ENCODE measurements at regions of chr9 and their contacts with region 1.

Region 1: DNA sequence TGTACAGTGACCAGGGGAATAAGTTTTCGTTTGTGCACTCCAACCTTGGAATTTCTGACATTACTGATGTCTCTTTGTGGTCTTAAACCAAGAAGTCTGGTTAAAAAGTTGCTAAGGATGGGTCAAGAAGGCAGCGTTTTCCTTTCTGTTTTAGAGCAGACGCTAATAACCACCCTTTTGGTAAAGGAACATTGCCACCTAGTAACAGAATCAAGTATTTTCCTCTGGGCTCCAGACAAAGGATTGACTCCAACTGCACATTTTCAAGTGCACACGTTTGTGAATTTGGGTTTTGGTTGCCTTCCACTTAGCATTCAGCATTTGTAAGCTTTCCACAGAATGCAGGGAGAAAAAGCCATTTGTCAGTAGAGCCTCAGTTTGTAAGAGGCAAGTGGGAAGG is 22.2 kb upstream of the CEP78 start:
- DNase-seq: no peak
- ATAC-seq: peak; percentile 49
- H3K4me3 Mint-ChIP-seq: no peak overlapping the region
- H3K27ac Mint-ChIP-seq: no peak overlapping the region
- H3K4me1 Mint-ChIP-seq: peaks cover 35% of the 10 kb centered on the region
- H3K27me3 Mint-ChIP-seq: no peaks in the 10 kb centered on the region
- CTCF ChIP-seq: peak; percentile 55

Region 2: GRCh38 chr9:77714077-77714549 is 499.6 kb before region 1 on chr9:
- CTCF ChIA-PET with region 1: no interaction called
- POLR2A ChIA-PET with region 1: no interaction called
- intact Hi-C with region 1: no loop called
- DNase-seq: no peak
- ATAC-seq: no peak
- H3K4me3 Mint-ChIP-seq: no peak overlapping the region
- H3K27ac Mint-ChIP-seq: no peak overlapping the region
- H3K4me1 Mint-ChIP-seq: peaks cover 17% of the 10 kb centered on the region
- H3K27me3 Mint-ChIP-seq: no peaks in the 10 kb centered on the region
- CTCF ChIP-seq: no peak

Region 3: DNA sequence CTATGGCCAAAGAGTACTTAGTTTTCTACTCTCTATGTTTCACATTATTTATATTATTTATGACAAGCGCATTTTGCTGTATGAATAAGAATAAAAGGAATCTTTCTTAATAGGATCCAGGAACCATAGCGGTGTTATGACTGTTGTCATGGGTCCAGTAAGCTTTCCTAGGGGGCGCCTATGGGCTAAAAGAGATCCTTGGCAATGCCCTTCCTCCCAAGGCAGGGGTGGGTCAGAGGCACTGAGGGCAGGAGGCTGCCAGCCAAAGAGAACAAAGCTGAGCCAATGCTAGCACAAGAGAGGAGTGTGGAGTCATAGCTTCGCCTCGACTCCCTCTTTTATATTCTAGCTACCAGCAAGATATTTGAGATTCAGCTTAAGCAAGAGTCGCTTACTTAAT is 83.7 kb before region 1 on chr9:
- CTCF ChIA-PET with region 1: no interaction called
- POLR2A ChIA-PET with region 1: no interaction called
- intact Hi-C with region 1: loop called (anchors 5 kb)
- DNase-seq: peak; percentile 9
- ATAC-seq: no peak
- H3K4me3 Mint-ChIP-seq: no peak overlapping the region
- H3K27ac Mint-ChIP-seq: no peak overlapping the region
- H3K4me1 Mint-ChIP-seq: peaks cover 20% of the 10 kb centered on the region
- H3K27me3 Mint-ChIP-seq: peaks cover 4% of the 10 kb centered on the region
- CTCF ChIP-seq: no peak

Measured in activated CD8-positive, alpha-beta T cell treated with anti-CD3 and anti-CD28 coated beads for 36 hours (primary cell).